ENCODE measurements at regions of chr11 and their contacts with region 1.

Region 1: DNA sequence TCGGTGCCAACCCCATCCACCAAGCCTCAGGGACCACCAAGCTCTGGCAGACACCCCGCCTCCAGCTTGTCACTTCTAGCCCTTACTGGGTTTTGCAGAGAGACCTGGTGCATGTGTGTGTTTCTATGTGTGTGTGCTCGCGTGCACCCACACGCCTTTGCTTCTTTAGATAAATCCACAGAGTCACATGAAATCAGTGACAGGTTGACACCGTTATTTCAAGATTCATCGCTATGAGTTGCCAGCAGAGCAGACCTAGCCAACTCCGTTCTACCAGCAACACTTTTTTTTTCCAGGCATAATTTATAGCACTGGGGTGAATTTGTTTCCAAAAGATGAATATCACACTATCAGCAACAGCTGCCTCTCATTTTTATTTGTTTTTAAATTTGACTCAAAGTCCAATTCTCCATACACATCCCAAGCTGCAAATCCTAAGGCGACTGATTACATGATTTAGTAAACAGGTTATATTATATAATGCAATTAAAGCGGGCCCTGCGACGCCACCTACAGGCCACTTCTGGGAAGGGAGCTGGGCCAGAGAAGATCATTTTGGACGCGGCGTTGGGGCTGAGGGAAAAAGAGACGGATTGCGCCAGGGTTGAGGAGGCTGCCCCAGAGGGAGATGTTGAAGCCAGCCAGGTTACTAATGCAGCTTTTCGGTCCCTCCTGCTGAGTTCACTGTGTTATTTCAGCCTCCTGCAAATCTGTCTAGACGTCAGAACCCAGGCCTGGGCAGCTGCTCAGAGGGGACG is 150.5 kb downstream of the FEZ1 start:
- DNase-seq: peak; percentile 20 to 60
- ATAC-seq: peak; percentile 51 to 87; a peak in 4 of 6 replicates
- H3K4me3 ChIP-seq: no peak overlapping the region
- H3K27ac ChIP-seq: no peak overlapping the region
- H3K4me1 ChIP-seq: no peaks in the 10 kb centered on the region
- CTCF ChIP-seq: peak; percentile 56
- EP300 ChIP-seq: no peak
- POLR2A ChIP-seq: no peak
- RAD21 ChIP-seq: peak; percentile 48 to 49; a peak in 4 of 5 replicates

Region 2: GRCh38 chr11:125091247-125091876 is 254.2 kb before region 1 on chr11:
- CTCF ChIA-PET with region 1: interaction called, 14 read pairs
- POLR2A ChIA-PET with region 1: no interaction called
- DNase-seq: peak; percentile 33 to 46
- ATAC-seq: peak; percentile 82 to 92
- H3K4me3 ChIP-seq: no peak overlapping the region
- H3K27ac ChIP-seq: no peak overlapping the region
- H3K4me1 ChIP-seq: no peaks in the 10 kb centered on the region
- CTCF ChIP-seq: peak; percentile 51
- EP300 ChIP-seq: no peak
- POLR2A ChIP-seq: no peak
- RAD21 ChIP-seq: peak; percentile 61 to 70

Region 3: GRCh38 chr11:125304136-125304535 is 41.5 kb before region 1 on chr11:
- CTCF ChIA-PET with region 1: interaction called, 10 read pairs
- POLR2A ChIA-PET with region 1: no interaction called
- DNase-seq: no peak
- ATAC-seq: no peak
- H3K4me3 ChIP-seq: no peak overlapping the region
- H3K27ac ChIP-seq: no peak overlapping the region
- H3K4me1 ChIP-seq: no peaks in the 10 kb centered on the region
- CTCF ChIP-seq: no peak
- EP300 ChIP-seq: no peak
- POLR2A ChIP-seq: no peak
- RAD21 ChIP-seq: no peak

Region 4: DNA sequence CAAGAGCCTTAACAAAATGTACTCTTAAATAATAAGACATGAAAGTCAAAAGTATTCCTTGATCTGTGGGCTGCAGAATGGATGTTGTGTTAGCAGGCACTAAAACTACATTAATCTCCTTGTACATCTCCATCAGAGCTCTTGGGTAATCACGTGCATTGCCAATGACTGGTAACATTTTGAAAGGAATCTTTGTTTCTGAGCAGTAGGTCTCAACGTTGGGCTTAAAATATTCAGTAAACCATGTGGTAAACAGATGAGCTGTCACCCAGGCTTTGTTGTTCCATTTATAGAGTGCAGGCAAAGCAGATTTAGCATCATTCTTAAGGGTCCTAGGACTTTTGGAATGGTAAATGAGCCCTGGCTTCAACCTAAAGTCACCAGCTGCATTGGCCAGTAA is 28.2 kb before region 1 on chr11:
- CTCF ChIA-PET with region 1: no interaction called
- POLR2A ChIA-PET with region 1: no interaction called
- DNase-seq: no peak
- ATAC-seq: no peak
- H3K4me3 ChIP-seq: no peak overlapping the region
- H3K27ac ChIP-seq: no peak overlapping the region
- H3K4me1 ChIP-seq: no peaks in the 10 kb centered on the region
- CTCF ChIP-seq: no peak
- EP300 ChIP-seq: no peak
- POLR2A ChIP-seq: no peak
- RAD21 ChIP-seq: no peak

Region 5: DNA sequence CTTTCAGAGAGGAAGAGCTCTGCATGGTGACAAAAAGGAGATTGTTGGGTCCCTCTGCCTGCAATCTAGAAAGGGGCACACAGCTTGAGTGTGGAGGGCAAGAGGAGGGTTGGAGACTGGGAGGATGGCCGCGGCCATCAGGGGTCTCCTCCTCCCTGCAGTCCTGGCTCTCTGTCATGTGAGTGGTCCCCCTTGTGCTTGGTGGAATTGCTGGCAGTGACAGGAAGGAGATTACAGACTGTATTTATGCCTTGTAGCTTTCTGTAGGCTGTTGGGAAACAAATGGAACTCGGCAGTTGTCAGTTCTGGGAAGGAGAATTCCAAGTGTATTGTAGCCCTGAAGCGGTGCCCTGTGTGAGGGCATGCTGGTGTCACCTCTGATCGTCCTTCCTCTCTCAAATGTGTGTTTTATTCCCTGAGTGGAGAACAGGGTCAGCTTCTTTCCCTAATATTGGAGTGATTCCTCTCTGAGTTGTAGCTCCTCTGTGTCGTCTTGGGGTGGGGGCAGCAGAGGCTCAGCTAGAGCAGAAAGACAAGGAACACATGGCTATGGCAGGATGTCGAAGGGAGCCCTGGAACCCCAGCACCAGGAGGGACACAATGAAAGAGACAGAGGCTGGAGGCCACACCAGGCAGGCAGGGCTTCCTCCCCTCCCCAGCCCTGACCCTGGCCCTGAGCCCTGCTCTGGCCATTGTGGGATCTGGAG is 17.9 kb before region 1 on chr11:
- CTCF ChIA-PET with region 1: interaction called, 11 read pairs
- POLR2A ChIA-PET with region 1: no interaction called
- DNase-seq: no peak
- ATAC-seq: no peak
- H3K4me3 ChIP-seq: no peak overlapping the region
- H3K27ac ChIP-seq: no peak overlapping the region
- H3K4me1 ChIP-seq: no peaks in the 10 kb centered on the region
- CTCF ChIP-seq: no peak
- EP300 ChIP-seq: no peak
- POLR2A ChIP-seq: no peak
- RAD21 ChIP-seq: no peak

Region 6: DNA sequence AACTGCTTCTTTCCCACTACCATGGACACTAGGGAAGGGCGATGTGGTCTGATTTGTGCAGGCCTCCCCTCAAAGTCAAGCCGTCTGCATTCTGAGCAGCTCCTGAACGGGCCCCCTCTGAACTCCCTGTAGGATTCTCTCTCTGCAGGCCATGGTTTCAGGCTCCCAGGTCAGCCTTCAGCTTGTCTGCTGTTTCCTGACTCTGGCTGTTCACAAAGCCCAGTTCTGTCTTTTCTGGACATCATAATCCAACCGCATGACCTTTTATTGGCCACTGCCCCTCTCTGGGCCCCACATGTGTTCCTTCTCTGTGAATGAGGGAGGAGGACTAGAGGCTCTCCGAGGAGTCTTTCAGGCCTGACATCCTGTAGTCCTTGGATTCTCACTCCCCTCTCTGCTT is 10.5 kb before region 1 on chr11:
- CTCF ChIA-PET with region 1: interaction called, 13 read pairs
- POLR2A ChIA-PET with region 1: no interaction called
- DNase-seq: no peak
- ATAC-seq: no peak
- H3K4me3 ChIP-seq: no peak overlapping the region
- H3K27ac ChIP-seq: no peak overlapping the region
- H3K4me1 ChIP-seq: no peaks in the 10 kb centered on the region
- CTCF ChIP-seq: no peak
- EP300 ChIP-seq: no peak
- POLR2A ChIP-seq: no peak
- RAD21 ChIP-seq: no peak

Region 7: DNA sequence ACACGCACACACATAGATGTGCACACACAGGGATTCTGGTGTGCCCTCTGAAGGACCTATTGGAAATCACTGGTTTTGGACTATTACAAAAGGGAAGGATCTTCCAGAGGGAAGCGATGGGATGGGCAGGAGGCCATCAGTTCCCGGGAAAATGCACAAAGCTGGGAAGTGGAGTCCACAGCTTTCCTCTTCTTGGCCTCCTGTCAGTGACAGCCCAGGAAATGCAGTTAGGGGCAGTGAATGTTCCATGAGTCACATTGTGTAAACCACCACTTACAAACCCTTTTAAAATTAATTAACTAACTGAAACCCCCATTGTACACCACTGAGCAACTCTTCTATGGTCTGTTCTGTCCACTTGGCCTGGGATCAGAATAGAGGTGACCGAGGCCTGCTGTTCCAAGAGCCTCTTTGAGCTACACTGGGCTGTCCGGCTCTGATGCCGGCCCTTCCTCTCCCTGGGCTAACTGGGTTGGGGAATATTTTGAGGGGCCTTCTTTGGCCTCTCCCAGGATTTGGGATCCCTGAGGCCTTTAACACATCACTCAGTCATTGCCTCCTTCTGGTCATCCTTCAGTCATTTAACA is 12.7 kb after region 1 on chr11:
- CTCF ChIA-PET with region 1: interaction called, 11 read pairs
- POLR2A ChIA-PET with region 1: no interaction called
- DNase-seq: no peak
- ATAC-seq: no peak
- H3K4me3 ChIP-seq: no peak overlapping the region
- H3K27ac ChIP-seq: no peak overlapping the region
- H3K4me1 ChIP-seq: no peaks in the 10 kb centered on the region
- CTCF ChIP-seq: no peak
- EP300 ChIP-seq: no peak
- POLR2A ChIP-seq: no peak
- RAD21 ChIP-seq: no peak

Measured in A549 (cell line).